MCF 10A (cell line): ENCODE measurements at regions of chr6 and their contacts with region 1.

Region 1: GRCh38 chr6:5501837-5502236 is 240.5 kb downstream of the FARS2 start:
- DNase-seq: no peak
- H3K4me3 Mint-ChIP-seq: no peak overlapping the region
- H3K27ac Mint-ChIP-seq: no peak overlapping the region
- H3K4me1 Mint-ChIP-seq: peaks cover 13% of the 10 kb centered on the region
- H3K27me3 Mint-ChIP-seq: no peaks in the 10 kb centered on the region
- CTCF ChIP-seq: no peak

Region 2: DNA sequence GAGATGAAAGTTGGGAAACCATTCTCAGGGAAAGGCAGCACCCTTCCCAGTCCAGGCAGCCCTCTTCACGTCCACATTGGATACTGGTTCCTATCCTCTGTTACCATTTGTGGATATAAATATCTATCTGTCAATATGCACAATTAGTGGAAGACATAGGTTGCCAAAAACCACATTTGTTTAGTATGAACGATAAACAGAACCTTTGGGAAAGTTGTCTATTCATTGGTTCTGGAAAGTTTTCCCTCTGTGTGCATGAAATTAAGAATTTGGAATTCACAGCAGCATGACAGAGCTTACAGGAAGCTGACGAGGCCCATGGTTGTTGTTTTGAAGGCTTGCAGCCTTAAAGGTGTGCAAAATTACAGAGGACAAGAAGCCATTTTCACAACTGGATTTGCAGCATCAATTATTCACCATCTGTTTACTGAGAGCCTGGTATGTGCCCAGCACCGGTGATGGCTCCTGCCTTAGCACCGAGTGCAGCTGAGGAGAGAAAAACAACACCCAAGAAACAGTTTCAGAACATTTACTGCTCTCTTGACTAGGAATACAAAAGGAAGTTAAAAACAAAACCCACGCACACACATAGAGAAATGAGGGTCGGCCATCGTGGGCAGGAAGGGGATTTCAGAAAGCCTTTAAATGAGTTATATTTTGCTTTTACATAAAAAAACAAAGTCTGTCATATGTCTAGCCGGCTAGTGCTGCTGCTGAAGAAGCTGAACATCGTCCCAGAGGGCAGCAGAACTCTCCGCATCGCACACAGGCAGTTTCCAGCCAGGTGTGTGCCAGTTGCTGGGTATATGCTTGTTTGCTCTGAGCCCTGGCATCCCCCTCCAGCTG is 79.1 kb after region 1 on chr6:
- CTCF ChIA-PET with region 1: no interaction called
- POLR2A ChIA-PET with region 1: no interaction called
- intact Hi-C with region 1: loop called (anchors 2 kb)
- DNase-seq: no peak
- H3K4me3 Mint-ChIP-seq: no peak overlapping the region
- H3K27ac Mint-ChIP-seq: no peak overlapping the region
- H3K4me1 Mint-ChIP-seq: no peaks in the 10 kb centered on the region
- H3K27me3 Mint-ChIP-seq: no peaks in the 10 kb centered on the region
- CTCF ChIP-seq: no peak